ENCODE measurements at regions of chr3 and their contacts with region 1.

Region 1: DNA sequence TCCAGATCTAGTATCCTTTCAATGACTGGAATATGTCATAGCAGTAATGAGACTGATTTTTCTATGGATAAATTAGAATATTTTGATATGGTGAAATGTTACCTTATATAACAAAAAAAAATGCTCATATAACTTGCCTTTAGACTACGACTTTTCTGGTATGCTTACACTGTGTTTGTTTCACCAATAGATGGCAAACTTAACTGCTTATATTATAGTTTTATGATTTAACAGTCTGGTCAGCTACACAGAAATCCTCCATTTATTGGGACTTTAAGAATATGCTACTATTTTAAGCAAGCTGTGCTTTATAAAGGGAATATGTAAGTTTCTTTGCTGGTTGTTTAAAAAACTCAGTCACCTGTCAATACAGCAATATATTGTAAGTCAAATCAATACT is 205.6 kb downstream of the VGLL3 start:
- DNase-seq: no peak
- H3K4me3 ChIP-seq: no peak overlapping the region
- H3K27me3 ChIP-seq: no peaks in the 10 kb centered on the region
- CTCF ChIP-seq: peak; percentile 54

Region 2: DNA sequence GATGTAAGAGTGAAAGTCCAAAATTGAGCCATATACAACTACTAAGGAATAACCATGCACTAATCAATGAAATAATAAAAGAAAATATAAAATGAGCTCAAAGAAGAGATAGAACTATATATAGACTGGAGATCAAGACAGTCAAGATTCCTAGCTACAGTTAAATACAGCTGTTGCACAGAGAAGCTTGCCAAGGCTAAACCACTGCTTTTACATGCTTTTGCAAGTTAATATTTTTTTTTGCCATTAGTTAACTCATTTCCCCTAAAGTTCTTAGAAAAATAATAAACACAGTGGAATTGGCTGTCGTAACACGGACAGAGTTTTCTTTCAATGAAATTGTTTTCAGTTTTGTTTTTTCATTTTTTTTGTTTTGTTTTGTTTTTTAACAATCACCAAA is 82.6 kb after region 1 on chr3:
- CTCF ChIA-PET with region 1: no interaction called
- POLR2A ChIA-PET with region 1: interaction called, 10 read pairs
- DNase-seq: peak; percentile 25
- H3K4me3 ChIP-seq: no peak overlapping the region
- H3K27me3 ChIP-seq: no peaks in the 10 kb centered on the region
- CTCF ChIP-seq: no peak

Region 3: GRCh38 chr3:86895202-86895601 is 109.8 kb after region 1 on chr3:
- CTCF ChIA-PET with region 1: no interaction called
- POLR2A ChIA-PET with region 1: no interaction called
- DNase-seq: no peak
- H3K4me3 ChIP-seq: no peak overlapping the region
- H3K27me3 ChIP-seq: no peaks in the 10 kb centered on the region
- CTCF ChIP-seq: no peak

Region 4: GRCh38 chr3:86923071-86923491 is 137.7 kb after region 1 on chr3:
- CTCF ChIA-PET with region 1: no interaction called
- POLR2A ChIA-PET with region 1: no interaction called
- DNase-seq: peak; percentile 62
- H3K4me3 ChIP-seq: no peak overlapping the region
- H3K27me3 ChIP-seq: no peaks in the 10 kb centered on the region; the same call in 1 of the 2 replicates
- CTCF ChIP-seq: no peak

Region 5: GRCh38 chr3:86937305-86937791 is 152.0 kb after region 1 on chr3:
- CTCF ChIA-PET with region 1: interaction called, 19 read pairs
- POLR2A ChIA-PET with region 1: no interaction called
- DNase-seq: peak; percentile 95
- H3K4me3 ChIP-seq: no peak overlapping the region
- H3K27me3 ChIP-seq: no peaks in the 10 kb centered on the region
- CTCF ChIP-seq: no peak

Measured in BJ (cell line).